ENCODE measurements at regions of chr4 and their contacts with region 1.

Region 1: DNA sequence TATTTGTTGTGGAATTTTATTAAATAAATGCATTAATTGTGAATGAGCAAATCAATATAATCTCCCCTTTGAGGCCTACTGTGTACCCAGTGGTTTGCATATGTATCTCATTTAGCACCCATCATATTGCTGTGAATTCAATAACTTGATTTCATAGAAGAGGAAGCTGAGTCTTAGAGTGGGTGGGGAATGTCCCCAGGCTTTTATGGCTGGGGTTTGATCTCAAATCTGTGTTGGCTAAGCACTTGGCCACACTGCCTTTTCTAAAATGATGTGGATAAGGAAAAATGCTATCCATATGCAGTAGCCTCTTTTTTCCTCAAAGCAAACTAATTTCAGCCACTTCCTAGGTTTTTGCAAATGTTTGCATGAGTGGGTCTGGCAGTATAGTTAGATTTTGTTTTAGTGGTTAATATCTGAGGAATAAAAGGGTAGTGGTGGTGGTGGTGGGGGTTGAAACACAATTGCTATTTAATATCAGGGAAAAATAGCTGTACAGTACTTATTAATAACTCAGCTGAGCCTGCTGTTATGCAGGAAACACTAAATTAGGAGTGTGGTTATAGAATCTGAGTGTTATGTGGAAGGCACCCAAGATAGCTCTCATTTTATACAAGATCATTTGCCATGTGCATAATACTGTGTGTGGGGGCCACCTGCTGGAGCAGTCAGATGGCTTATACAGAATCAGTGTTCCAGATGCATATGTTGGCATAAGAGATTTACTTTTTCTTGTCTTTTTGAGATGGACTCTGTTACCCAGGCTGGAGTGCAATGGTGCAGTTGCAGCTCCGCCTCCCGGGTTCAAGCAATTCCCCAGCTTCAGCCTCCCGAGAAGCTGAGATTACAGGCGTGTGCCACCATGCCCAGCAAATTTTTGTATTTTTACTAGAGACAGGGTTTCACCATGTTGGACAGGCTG is 108.0 kb downstream of the TMEM131L start:
- DNase-seq: peak; percentile 55
- H3K4me3 Mint-ChIP-seq: no peak overlapping the region
- H3K27ac Mint-ChIP-seq: peak overlapping the region; percentile 20
- H3K4me1 Mint-ChIP-seq: peaks cover 57% of the 10 kb centered on the region
- H3K27me3 Mint-ChIP-seq: no peaks in the 10 kb centered on the region

Region 2: DNA sequence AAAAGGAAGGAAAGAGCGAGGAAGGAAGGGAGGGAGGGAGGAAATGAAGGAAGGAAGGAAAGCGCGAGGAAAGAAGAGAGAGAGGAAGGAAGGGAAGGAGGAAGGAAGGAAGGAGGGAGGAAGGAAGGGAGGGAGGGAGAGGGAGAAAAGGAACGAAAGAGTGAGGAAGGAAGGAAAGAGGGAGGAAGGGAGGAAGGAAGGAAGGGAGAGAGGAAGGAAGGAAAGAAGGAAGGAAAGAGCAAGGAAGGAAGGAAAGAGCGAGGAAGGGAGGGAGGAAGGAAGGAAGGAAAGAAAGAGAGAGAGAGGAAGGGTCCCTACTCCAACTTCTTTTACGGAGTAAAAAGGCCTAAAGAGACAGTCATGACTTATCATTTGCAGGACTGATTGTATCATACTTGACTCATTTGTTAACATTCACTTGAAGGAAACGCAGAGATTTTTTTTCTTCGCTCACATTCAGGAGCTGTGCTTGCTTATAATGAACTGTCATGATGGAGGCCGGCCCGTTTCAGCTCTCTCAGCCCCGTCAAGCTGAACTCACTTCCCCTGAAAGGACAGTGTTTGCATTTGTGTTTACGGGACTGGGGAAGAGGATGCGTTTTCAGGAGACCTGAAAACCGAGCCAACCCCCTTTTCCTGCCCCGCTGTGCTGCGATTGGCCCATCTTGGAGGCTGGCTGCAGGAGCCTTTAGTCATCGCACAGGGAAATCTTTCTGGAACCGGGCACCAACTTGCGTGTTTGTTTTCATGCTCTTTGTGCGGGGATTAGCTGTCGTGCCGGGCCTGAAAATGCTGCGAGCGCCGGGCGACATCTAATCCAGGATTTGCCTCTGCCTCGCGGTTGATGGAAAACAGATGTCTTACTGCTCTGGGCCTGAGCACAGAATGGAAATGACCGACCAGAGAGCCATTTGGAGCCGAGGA is 352.1 kb before region 1 on chr4:
- intact Hi-C with region 1: loop called (anchors 10 kb)
- DNase-seq: no peak
- H3K4me3 Mint-ChIP-seq: peak overlapping the region; percentile 65
- H3K27ac Mint-ChIP-seq: no peak overlapping the region
- H3K4me1 Mint-ChIP-seq: peaks cover 9% of the 10 kb centered on the region
- H3K27me3 Mint-ChIP-seq: peaks cover 81% of the 10 kb centered on the region

Region 3: GRCh38 chr4:153421941-153422340 is 152.2 kb before region 1 on chr4:
- intact Hi-C with region 1: loop called (anchors 1 kb)
- DNase-seq: no peak
- H3K4me3 Mint-ChIP-seq: no peak overlapping the region
- H3K27ac Mint-ChIP-seq: no peak overlapping the region
- H3K4me1 Mint-ChIP-seq: peaks cover 47% of the 10 kb centered on the region
- H3K27me3 Mint-ChIP-seq: no peaks in the 10 kb centered on the region

Region 4: GRCh38 chr4:153466081-153466948 is 107.8 kb before region 1 on chr4 and contains the start of gene TMEM131L:
- intact Hi-C with region 1: loop called (anchors 1 kb)
- DNase-seq: peak; percentile 66
- H3K4me3 Mint-ChIP-seq: peak within 1 kb of the TSS; percentile 82
- H3K27ac Mint-ChIP-seq: peak within 1 kb of the TSS; percentile 82
- H3K4me1 Mint-ChIP-seq: peaks cover 53% of the 10 kb centered on the region
- H3K27me3 Mint-ChIP-seq: no peaks in the 10 kb centered on the region
- total RNA-seq, gene TMEM131L: 28.1 and 29.7 TPM in 2 replicates

Region 5: DNA sequence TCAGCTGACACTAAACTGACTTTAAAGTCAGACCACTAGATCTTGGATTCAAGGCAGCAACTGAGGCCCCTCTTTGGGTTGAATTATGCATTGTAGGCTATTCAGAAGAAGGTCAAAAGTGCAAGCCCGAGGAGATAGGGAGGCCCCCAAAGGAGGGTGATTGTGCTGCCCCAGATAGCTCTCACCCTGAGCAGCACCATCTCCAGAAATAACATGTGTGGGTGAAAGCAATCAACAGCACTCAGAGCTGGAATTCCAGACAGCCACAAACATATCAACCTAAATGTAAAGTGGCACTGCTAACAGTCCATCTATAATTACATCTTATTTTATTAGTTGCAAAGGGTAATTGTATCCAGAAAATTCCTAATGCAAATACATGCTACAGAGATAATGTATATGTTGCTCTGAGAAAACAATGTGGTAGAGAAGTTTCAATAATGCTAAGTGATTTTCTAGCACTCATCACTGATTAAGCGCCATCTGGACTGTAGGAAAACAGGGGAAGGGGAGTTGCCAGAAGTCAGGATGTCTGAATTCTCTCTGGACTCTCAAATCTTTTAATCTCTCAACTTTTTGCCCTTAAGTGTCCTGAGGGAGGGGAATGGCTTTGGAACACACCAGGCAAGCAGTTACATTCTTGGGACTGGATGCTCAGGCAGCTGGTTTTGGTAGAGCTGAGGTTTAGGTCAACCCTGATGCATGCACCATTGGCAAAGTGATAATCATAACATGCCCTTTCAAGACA is 276.6 kb after region 1 on chr4:
- intact Hi-C with region 1: no loop called
- DNase-seq: no peak
- H3K4me3 Mint-ChIP-seq: no peak overlapping the region
- H3K27ac Mint-ChIP-seq: no peak overlapping the region
- H3K4me1 Mint-ChIP-seq: no peaks in the 10 kb centered on the region
- H3K27me3 Mint-ChIP-seq: peaks cover 4% of the 10 kb centered on the region

Measured in activated T-helper 2 cell treated with anti-CD3 and anti-CD28 coated beads, Interferon-gamma antibody, Interleukin-2, Interleukin-4, amounts not matched to agents 10 μg/mL and 5 μg/mL and 100 μg/mL, durations not matched to agents 14 hours and 24 hours and 36 hours (primary cell).